ENCODE measurements at regions of chr6 and their contacts with region 1.

Region 1: GRCh38 chr6:36094753-36095496 is 35.4 kb upstream of the MAPK13 start:
- DNase-seq: peak; percentile 73 to 77 (median 75)
- H3K4me3 ChIP-seq: no peak overlapping the region
- H3K4me3 Mint-ChIP-seq: peak overlapping the region in 1 of 8 donors; percentile 18
- H3K27ac ChIP-seq: peak overlapping the region; percentile 39
- H3K27ac Mint-ChIP-seq: peak overlapping the region; percentile 28 to 93 (median 79)
- H3K4me1 ChIP-seq: peaks cover 28% of the 10 kb centered on the region
- H3K4me1 Mint-ChIP-seq: peaks cover 19 to 28% (median 25%) of the 10 kb centered on the region in 4 donors
- H3K27me3 ChIP-seq: no peaks in the 10 kb centered on the region
- H3K27me3 Mint-ChIP-seq: no peaks in the 10 kb centered on the region

Region 2: DNA sequence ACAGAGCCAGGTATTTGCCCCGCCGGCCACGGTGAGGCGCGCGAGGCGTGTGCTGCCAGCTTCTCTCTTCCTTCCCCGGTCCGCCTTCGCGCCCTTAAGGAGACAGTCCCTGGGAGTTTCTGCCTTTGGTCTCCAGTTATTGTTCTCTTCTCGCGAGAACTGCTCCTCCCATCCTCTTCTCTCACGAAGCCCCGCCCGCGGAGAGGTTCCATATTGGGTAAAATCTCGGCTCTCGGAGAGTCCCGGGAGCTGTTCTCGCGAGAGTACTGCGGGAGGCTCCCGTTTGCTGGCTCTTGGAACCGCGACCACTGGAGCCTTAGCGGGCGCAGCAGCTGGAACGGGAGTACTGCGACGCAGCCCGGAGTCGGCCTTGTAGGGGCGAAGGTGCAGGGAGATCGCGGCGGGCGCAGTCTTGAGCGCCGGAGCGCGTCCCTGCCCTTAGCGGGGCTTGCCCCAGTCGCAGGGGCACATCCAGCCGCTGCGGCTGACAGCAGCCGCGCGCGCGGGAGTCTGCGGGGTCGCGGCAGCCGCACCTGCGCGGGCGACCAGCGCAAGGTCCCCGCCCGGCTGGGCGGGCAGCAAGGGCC is 67.3 kb before region 1 on chr6 and contains the start of gene MAPK14:
- CTCF ChIA-PET with region 1: interaction called, 144 read pairs
- POLR2A ChIA-PET with region 1: interaction called, 108 read pairs
- intact Hi-C with region 1: loop called (anchors 1 kb)
- DNase-seq: peak; percentile 98 to 100 (median 100)
- H3K4me3 ChIP-seq: peak within 1 kb of the TSS; percentile 67 to 97
- H3K4me3 Mint-ChIP-seq: peak within 1 kb of the TSS; percentile 93 to 97 (median 95)
- H3K27ac ChIP-seq: peak within 1 kb of the TSS; percentile 78
- H3K27ac Mint-ChIP-seq: peak within 1 kb of the TSS; percentile 89 to 96 (median 94)
- H3K4me1 ChIP-seq: peaks cover 40% of the 10 kb centered on the region
- H3K4me1 Mint-ChIP-seq: peaks cover 22 to 46% (median 33%) of the 10 kb centered on the region in 4 donors
- H3K27me3 ChIP-seq: no peaks in the 10 kb centered on the region
- H3K27me3 Mint-ChIP-seq: peaks cover 13 to 16% of the 10 kb centered on the region in 2 donors
- total RNA-seq, gene MAPK14: 58.9 to 64.3 TPM

Region 3: DNA sequence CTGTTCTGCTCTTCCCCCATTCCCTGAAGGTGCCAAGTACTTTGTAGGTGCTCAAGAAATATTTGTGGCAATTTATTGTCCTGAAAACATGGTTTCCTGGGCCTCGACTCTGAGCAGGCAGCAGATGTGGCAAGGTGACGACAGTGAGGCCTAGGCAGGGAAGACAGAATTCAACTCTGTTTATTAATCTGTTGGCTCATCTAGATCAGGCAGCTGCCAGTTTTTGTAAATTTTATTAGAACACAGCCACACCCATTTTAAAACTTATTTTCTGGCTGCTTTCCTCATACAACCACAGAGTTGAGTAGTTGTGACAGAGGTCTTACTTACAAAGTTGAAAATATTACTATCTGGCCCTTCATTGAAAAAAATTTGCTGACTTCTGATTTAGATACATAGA is 42.8 kb before region 1 on chr6:
- CTCF ChIA-PET with region 1: interaction called, 10 read pairs
- POLR2A ChIA-PET with region 1: no interaction called
- intact Hi-C with region 1: no loop called
- DNase-seq: no peak
- H3K4me3 ChIP-seq: no peak overlapping the region
- H3K4me3 Mint-ChIP-seq: no peak overlapping the region
- H3K27ac ChIP-seq: no peak overlapping the region
- H3K27ac Mint-ChIP-seq: no peak overlapping the region
- H3K4me1 ChIP-seq: peaks cover 33% of the 10 kb centered on the region
- H3K4me1 Mint-ChIP-seq: peaks cover 5 to 21% (median 13%) of the 10 kb centered on the region in 4 donors
- H3K27me3 ChIP-seq: no peaks in the 10 kb centered on the region
- H3K27me3 Mint-ChIP-seq: no peaks in the 10 kb centered on the region

Region 4: GRCh38 chr6:36075656-36076055 is 19.3 kb before region 1 on chr6:
- CTCF ChIA-PET with region 1: interaction called, 43 read pairs
- POLR2A ChIA-PET with region 1: interaction called, 3 read pairs
- intact Hi-C with region 1: no loop called
- DNase-seq: no peak
- H3K4me3 ChIP-seq: no peak overlapping the region
- H3K4me3 Mint-ChIP-seq: peak overlapping the region in 1 of 8 donors; percentile 13
- H3K27ac ChIP-seq: no peak overlapping the region
- H3K27ac Mint-ChIP-seq: peak overlapping the region in 5 of 7 donors; percentile 14 to 77 (median 29)
- H3K4me1 ChIP-seq: peaks cover 4% of the 10 kb centered on the region
- H3K4me1 Mint-ChIP-seq: peaks cover 9 to 21% (median 15%) of the 10 kb centered on the region in 4 donors
- H3K27me3 ChIP-seq: no peaks in the 10 kb centered on the region
- H3K27me3 Mint-ChIP-seq: no peaks in the 10 kb centered on the region

Region 5: GRCh38 chr6:36109092-36109491 is 14.2 kb after region 1 on chr6:
- CTCF ChIA-PET with region 1: interaction called, 27 read pairs
- POLR2A ChIA-PET with region 1: interaction called, 7 read pairs
- intact Hi-C with region 1: loop called (anchors 2 kb)
- DNase-seq: peak; percentile 59 to 72 (median 61)
- H3K4me3 ChIP-seq: no peak overlapping the region
- H3K4me3 Mint-ChIP-seq: peak overlapping the region in 7 of 8 donors; percentile 7 to 57 (median 51)
- H3K27ac ChIP-seq: peak overlapping the region; percentile 22
- H3K27ac Mint-ChIP-seq: peak overlapping the region; percentile 80 to 95 (median 91)
- H3K4me1 ChIP-seq: peaks cover 40% of the 10 kb centered on the region
- H3K4me1 Mint-ChIP-seq: peaks cover 26 to 48% (median 36%) of the 10 kb centered on the region in 4 donors
- H3K27me3 ChIP-seq: no peaks in the 10 kb centered on the region
- H3K27me3 Mint-ChIP-seq: no peaks in the 10 kb centered on the region

Region 6: GRCh38 chr6:36123257-36124139 is 28.6 kb after region 1 on chr6:
- CTCF ChIA-PET with region 1: interaction called, 39 read pairs
- POLR2A ChIA-PET with region 1: interaction called, 22 read pairs
- intact Hi-C with region 1: loop called (anchors 2 kb)
- DNase-seq: peak; percentile 90 to 95 (median 91)
- H3K4me3 ChIP-seq: no peak overlapping the region
- H3K4me3 Mint-ChIP-seq: peak overlapping the region; percentile 4 to 76 (median 44)
- H3K27ac ChIP-seq: peak overlapping the region; percentile 90
- H3K27ac Mint-ChIP-seq: peak overlapping the region; percentile 91 to 99 (median 96)
- H3K4me1 ChIP-seq: peaks cover 90% of the 10 kb centered on the region
- H3K4me1 Mint-ChIP-seq: peaks cover 66 to 89% (median 78%) of the 10 kb centered on the region in 4 donors
- H3K27me3 ChIP-seq: no peaks in the 10 kb centered on the region
- H3K27me3 Mint-ChIP-seq: no peaks in the 10 kb centered on the region

Region 7: GRCh38 chr6:36196880-36197548 is 102.1 kb after region 1 on chr6:
- CTCF ChIA-PET with region 1: interaction called, 14 read pairs
- POLR2A ChIA-PET with region 1: interaction called, 6 read pairs
- intact Hi-C with region 1: loop called (anchors 1 kb)
- DNase-seq: peak; percentile 96 to 99 (median 97)
- H3K4me3 ChIP-seq: peak overlapping the region; percentile 71 to 76
- H3K4me3 Mint-ChIP-seq: peak overlapping the region; percentile 89 to 94 (median 92)
- H3K27ac ChIP-seq: peak overlapping the region; percentile 73
- H3K27ac Mint-ChIP-seq: peak overlapping the region; percentile 83 to 96 (median 92)
- H3K4me1 ChIP-seq: peaks cover 42% of the 10 kb centered on the region
- H3K4me1 Mint-ChIP-seq: peaks cover 26 to 56% (median 41%) of the 10 kb centered on the region in 4 donors
- H3K27me3 ChIP-seq: no peaks in the 10 kb centered on the region
- H3K27me3 Mint-ChIP-seq: no peaks in the 10 kb centered on the region

Measured in CD4-positive, alpha-beta memory T cell (primary cell).